T-cell (primary cell): ENCODE measurements at regions of chr12 and their contacts with region 1.

Region 1: GRCh38 chr12:55738123-55739024 is 4.5 kb upstream of the GDF11 start:
- DNase-seq: peak; percentile 47 to 92 (median 67)
- ATAC-seq: peak; percentile 74 to 78 (median 76)
- H3K4me3 ChIP-seq: peak overlapping the region; percentile 51 to 70
- H3K4me3 Mint-ChIP-seq: peak overlapping the region; percentile 79 to 85 (median 85)
- H3K27ac ChIP-seq: peak overlapping the region; percentile 50
- H3K27ac Mint-ChIP-seq: peak overlapping the region; percentile 92 to 97
- H3K4me1 ChIP-seq: peaks cover 6 to 29% of the 10 kb centered on the region in 2 experiments
- H3K4me1 Mint-ChIP-seq: peaks cover 22 to 33% (median 31%) of the 10 kb centered on the region in 3 donors
- H3K27me3 ChIP-seq: no peaks in the 10 kb centered on the region
- H3K27me3 Mint-ChIP-seq: no peaks in the 10 kb centered on the region

Region 2: GRCh38 chr12:55817346-55818139 is 79.2 kb after region 1 on chr12 and contains the starts of genes ORMDL2 and SARNP:
- CTCF ChIA-PET with region 1: interaction called, 5 to 28 read pairs
- POLR2A ChIA-PET with region 1: interaction called in 1 of 2 experiments, 6 read pairs
- DNase-seq: peak; percentile 77 to 100 (median 97)
- ATAC-seq: peak; percentile 91 to 96 (median 94)
- H3K4me3 ChIP-seq: peak within 1 kb of the TSS; percentile 83 to 97
- H3K4me3 Mint-ChIP-seq: no peak within 1 kb of the TSS
- H3K27ac ChIP-seq: peak within 1 kb of the TSS; percentile 65
- H3K27ac Mint-ChIP-seq: no peak within 1 kb of the TSS
- H3K4me1 ChIP-seq: peaks cover 24 to 26% of the 10 kb centered on the region in 2 experiments
- H3K4me1 Mint-ChIP-seq: peaks cover 41 to 51% (median 50%) of the 10 kb centered on the region in 3 donors
- H3K27me3 ChIP-seq: no peaks in the 10 kb centered on the region
- H3K27me3 Mint-ChIP-seq: no peaks in the 10 kb centered on the region
- total RNA-seq, gene ORMDL2: 19.0 to 46.8 (median 41.6) TPM
- total RNA-seq, gene SARNP: 36.9 to 50.3 (median 46.8) TPM

Region 3: DNA sequence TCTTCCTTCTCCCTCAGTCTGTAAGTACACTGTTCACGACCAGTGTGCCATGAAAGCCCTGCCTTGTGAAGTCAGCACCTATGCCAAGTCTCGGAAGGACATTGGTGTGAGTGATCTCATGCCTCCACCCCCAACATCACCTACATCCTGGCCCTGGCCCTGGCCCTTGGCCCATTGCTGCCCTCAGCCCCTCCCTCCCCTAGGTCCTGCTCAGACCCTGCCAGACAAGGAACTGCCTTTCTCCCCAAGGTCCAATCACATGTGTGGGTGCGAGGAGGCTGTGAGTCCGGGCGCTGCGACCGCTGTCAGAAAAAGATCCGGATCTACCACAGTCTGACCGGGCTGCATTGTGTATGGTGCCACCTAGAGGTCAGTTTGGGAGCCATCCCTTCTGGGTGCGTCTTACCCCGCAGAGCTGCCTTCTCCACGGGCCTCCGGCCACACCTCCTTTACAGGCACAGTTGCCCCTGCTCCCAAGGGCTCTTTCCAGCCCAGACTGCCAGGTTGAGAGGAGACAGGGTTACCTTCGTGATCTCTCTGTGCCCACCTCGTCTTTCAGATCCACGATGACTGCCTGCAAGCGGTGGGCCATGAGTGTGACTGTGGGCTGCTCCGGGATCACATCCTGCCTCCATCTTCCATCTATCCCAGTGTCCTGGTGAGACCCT is 201.8 kb after region 1 on chr12:
- CTCF ChIA-PET with region 1: interaction called, 4 to 47 read pairs
- POLR2A ChIA-PET with region 1: no interaction called
- DNase-seq: peak; percentile 62 to 92 (median 78)
- ATAC-seq: peak; percentile 81 to 91 (median 84)
- H3K4me3 ChIP-seq: no peak overlapping the region
- H3K4me3 Mint-ChIP-seq: peak overlapping the region; percentile 2 to 63 (median 44)
- H3K27ac ChIP-seq: peak overlapping the region; percentile 48
- H3K27ac Mint-ChIP-seq: peak overlapping the region; percentile 96 to 99
- H3K4me1 ChIP-seq: peaks cover 48 to 64% of the 10 kb centered on the region in 2 experiments
- H3K4me1 Mint-ChIP-seq: peaks cover 82 to 91% (median 89%) of the 10 kb centered on the region in 3 donors
- H3K27me3 ChIP-seq: no peaks in the 10 kb centered on the region
- H3K27me3 Mint-ChIP-seq: no peaks in the 10 kb centered on the region

Region 4: GRCh38 chr12:56029666-56030293 is 291.4 kb after region 1 on chr12:
- CTCF ChIA-PET with region 1: interaction called in 1 of 2 experiments, 14 read pairs
- POLR2A ChIA-PET with region 1: no interaction called
- DNase-seq: peak in 23 of 35 experiments; percentile 7 to 67 (median 33)
- ATAC-seq: peak; percentile 36 to 56 (median 44)
- H3K4me3 ChIP-seq: no peak overlapping the region
- H3K4me3 Mint-ChIP-seq: no peak overlapping the region
- H3K27ac ChIP-seq: no peak overlapping the region
- H3K27ac Mint-ChIP-seq: peak overlapping the region in 1 of 2 donors; percentile 5
- H3K4me1 ChIP-seq: peaks cover 19 to 21% of the 10 kb centered on the region in 2 experiments
- H3K4me1 Mint-ChIP-seq: peaks cover 28 to 32% (median 31%) of the 10 kb centered on the region in 3 donors
- H3K27me3 ChIP-seq: no peaks in the 10 kb centered on the region
- H3K27me3 Mint-ChIP-seq: no peaks in the 10 kb centered on the region